ENCODE measurements at regions of chr17 and their contacts with region 1.

Region 1: DNA sequence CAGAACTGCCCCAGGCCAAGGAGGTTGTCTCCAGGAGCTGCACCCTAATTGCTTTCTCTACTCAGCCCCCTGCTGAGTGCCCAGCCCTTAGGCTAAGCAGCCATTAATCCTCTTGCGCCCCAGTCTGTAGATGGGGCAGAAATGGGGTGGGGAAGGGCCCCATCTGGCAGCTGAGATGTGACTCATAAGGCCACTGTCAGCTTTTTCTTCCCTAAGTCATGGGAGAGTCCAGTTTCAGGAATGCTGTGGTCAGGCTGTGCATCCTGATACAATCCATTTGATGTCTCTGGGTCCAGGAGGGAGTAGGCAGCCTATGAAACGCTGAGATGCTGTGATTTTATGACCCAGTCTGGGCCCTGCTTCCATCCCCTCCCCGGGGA is 12.3 kb downstream of the PLXDC1 start:
- DNase-seq: no peak
- ATAC-seq: peak in 1 of 4 donors; percentile 17
- H3K4me3 ChIP-seq: no peak overlapping the region
- H3K27ac ChIP-seq: peak overlapping the region in 9 of 12 donors; percentile 8 to 62 (median 43)
- H3K4me1 ChIP-seq: peaks cover 0 to 38% (median 10%) of the 10 kb centered on the region in 12 donors
- H3K27me3 ChIP-seq: no peaks in the 10 kb centered on the region
- CTCF ChIP-seq: no peak
- POLR2A ChIP-seq: no peak

Region 2: GRCh38 chr17:39099663-39100286 is 39.4 kb before region 1 on chr17:
- intact Hi-C with region 1: loop called in 2 of 10 experiments (anchors 5 to 10 kb)
- DNase-seq: peak in 4 of 5 donors; percentile 75 to 88 (median 86)
- ATAC-seq: peak in 3 of 4 donors; percentile 54 to 64 (median 63)
- H3K4me3 ChIP-seq: peak overlapping the region in 1 of 12 donors; percentile 14
- H3K27ac ChIP-seq: peak overlapping the region in 11 of 12 donors; percentile 15 to 87 (median 69)
- H3K4me1 ChIP-seq: peaks cover 0 to 60% (median 41%) of the 10 kb centered on the region in 12 donors
- H3K27me3 ChIP-seq: no peaks in the 10 kb centered on the region
- CTCF ChIP-seq: no peak
- POLR2A ChIP-seq: no peak

Region 3: DNA sequence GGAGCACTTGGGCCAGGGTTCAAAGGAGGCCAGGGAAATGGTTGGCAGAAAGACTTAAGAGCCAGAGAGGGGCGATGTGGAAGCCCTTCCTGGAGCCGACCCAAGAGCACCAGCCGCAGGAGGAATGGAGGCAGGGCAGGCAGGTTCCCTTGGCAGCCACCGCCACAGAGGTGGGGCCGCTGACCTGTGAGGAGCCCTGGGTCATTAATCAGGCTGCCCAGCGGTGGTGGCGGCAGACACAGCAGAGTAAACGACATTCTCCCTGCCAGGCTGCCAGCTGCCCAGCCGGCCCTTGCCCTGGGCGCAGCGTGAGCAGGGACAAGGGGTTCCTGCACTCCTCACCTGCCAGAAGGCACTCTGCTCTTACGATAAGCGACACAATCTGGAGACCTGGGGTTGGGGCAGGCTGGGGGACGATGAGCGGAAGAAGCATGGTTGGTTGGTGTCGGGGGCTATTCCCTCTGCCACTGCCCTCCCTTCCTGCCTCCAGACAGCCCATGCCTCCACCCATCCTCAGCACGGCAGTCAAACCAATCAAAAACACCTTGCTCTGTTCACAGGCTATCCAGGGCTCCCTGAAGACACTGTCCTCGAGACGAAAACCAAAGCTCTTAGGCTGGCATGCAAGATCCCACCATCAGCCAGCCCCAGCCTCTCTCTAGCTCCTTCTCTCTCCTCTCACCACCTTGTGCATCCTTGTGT is 28.5 kb before region 1 on chr17:
- intact Hi-C with region 1: no loop called
- DNase-seq: peak in 1 of 5 donors; percentile 15
- ATAC-seq: no peak
- H3K4me3 ChIP-seq: no peak overlapping the region
- H3K27ac ChIP-seq: no peak overlapping the region
- H3K4me1 ChIP-seq: peaks cover 0 to 6% (median 0%) of the 10 kb centered on the region in 12 donors
- H3K27me3 ChIP-seq: no peaks in the 10 kb centered on the region
- CTCF ChIP-seq: no peak
- POLR2A ChIP-seq: no peak

Region 4: DNA sequence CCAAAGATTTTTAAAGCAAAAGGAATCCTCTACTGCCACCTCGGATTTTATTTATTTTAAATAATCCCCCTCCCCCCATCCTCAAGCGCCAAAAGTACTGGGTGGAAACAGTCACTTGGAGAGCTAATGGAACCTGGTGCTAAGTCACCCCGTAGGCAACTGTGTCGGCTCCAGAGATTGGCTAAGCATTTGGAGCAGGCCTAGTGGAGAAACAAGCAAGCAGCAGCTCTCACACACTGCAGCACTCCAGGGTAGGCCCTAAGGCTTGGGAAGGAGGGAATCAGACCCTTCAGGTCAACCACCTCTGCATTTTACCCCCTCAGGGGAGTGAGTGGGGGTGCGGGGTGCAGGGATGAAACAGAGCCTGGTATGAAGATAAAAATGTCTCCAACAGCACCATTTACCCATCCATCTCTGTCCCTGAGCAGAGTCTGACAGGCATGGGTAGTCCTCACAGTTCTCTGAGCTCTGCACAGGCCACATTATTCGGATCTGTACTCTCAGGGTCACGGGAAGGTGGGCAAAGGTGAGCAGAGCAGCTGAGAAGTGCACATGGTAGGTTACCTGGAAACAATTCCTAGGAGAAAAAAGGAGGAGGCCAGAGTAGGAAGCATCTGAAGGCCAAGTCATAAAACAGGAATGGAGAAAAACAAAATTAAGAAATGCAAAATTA is 113.8 kb after region 1 on chr17:
- intact Hi-C with region 1: no loop called
- DNase-seq: no peak
- ATAC-seq: no peak
- H3K4me3 ChIP-seq: no peak overlapping the region
- H3K27ac ChIP-seq: no peak overlapping the region
- H3K4me1 ChIP-seq: no peaks in the 10 kb centered on the region
- H3K27me3 ChIP-seq: no peaks in the 10 kb centered on the region
- CTCF ChIP-seq: no peak
- POLR2A ChIP-seq: no peak